ENCODE measurements at regions of chr10 and their contacts with region 1.

Region 1: GRCh38 chr10:69644658-69645295 is 14.7 kb downstream of the FAM241B start:
- DNase-seq: peak; percentile 39
- H3K4me3 ChIP-seq: no peak overlapping the region
- H3K27ac ChIP-seq: no peak overlapping the region
- H3K4me1 ChIP-seq: no peaks in the 10 kb centered on the region
- CTCF ChIP-seq: peak; percentile 87

Region 2: GRCh38 chr10:69558559-69558958 is 86.2 kb before region 1 on chr10:
- CTCF ChIA-PET with region 1: no interaction called
- POLR2A ChIA-PET with region 1: no interaction called
- intact Hi-C with region 1: no loop called
- DNase-seq: no peak
- H3K4me3 ChIP-seq: no peak overlapping the region
- H3K27ac ChIP-seq: no peak overlapping the region
- H3K4me1 ChIP-seq: no peaks in the 10 kb centered on the region
- CTCF ChIP-seq: no peak

Region 3: GRCh38 chr10:69624245-69624786 is 20.5 kb before region 1 on chr10:
- CTCF ChIA-PET with region 1: no interaction called
- POLR2A ChIA-PET with region 1: no interaction called
- intact Hi-C with region 1: no loop called
- DNase-seq: no peak
- H3K4me3 ChIP-seq: no peak overlapping the region
- H3K27ac ChIP-seq: no peak overlapping the region
- H3K4me1 ChIP-seq: no peaks in the 10 kb centered on the region
- CTCF ChIP-seq: no peak

Region 4: DNA sequence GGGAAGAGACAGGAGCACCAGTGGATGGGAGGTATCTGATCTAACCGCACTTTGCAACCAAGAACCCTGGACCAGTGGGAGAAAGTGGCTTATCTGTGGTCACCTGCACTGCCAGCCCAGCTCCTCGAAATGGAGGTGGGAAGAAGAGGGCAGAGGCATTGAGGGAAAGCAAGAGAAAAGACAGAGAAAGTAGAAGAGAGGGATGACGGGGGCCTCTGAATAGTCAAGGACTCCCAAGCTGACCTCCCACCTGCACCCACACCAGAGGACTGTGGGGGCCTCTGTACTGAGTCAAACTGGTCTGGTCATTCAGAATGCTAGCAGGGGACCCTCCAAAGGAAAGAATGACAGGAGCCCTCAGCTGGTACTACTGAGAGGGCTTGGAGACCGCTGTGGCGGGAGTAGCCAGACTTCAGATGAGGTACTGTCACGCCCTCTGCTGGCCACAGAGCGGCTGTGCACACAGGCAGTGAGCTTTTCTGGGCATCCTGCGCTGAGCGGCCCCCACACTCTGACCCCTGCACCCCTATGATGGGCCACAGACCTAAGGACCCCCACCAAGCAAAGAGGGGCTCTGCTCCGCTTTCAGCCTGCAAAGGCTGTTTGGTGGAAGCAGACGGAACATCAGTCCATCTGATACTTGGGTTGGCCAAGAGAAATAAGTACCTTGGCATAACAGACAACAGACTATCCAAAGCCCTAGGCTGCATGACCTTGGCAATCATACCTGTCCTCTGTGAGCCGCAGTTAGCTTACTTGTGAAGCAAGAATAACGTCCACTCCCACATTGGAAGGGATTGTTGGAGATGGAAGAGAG is 269.8 kb after region 1 on chr10:
- CTCF ChIA-PET with region 1: no interaction called
- POLR2A ChIA-PET with region 1: no interaction called
- intact Hi-C with region 1: loop called (anchors 1 kb)
- DNase-seq: peak; percentile 69
- H3K4me3 ChIP-seq: no peak overlapping the region
- H3K27ac ChIP-seq: no peak overlapping the region
- H3K4me1 ChIP-seq: no peaks in the 10 kb centered on the region
- CTCF ChIP-seq: peak; percentile 91

Measured in OCI-LY7 (cell line).